Activated CD4-positive, alpha-beta memory T cell treated with anti-CD3 and anti-CD28 coated beads, Interleukin-2, amount 10 ng/mL, durations not matched to agents 7 days and 5 days (primary cell): ENCODE measurements at regions of chr9 and their contacts with region 1.

Region 1: GRCh38 chr9:69421908-69422801 is 97.1 kb downstream of the ENTREP1 start:
- DNase-seq: peak; percentile 50
- H3K4me3 Mint-ChIP-seq: no peak overlapping the region
- H3K27ac Mint-ChIP-seq: no peak overlapping the region
- H3K4me1 Mint-ChIP-seq: no peaks in the 10 kb centered on the region
- H3K27me3 Mint-ChIP-seq: peaks cover 4% of the 10 kb centered on the region

Region 2: DNA sequence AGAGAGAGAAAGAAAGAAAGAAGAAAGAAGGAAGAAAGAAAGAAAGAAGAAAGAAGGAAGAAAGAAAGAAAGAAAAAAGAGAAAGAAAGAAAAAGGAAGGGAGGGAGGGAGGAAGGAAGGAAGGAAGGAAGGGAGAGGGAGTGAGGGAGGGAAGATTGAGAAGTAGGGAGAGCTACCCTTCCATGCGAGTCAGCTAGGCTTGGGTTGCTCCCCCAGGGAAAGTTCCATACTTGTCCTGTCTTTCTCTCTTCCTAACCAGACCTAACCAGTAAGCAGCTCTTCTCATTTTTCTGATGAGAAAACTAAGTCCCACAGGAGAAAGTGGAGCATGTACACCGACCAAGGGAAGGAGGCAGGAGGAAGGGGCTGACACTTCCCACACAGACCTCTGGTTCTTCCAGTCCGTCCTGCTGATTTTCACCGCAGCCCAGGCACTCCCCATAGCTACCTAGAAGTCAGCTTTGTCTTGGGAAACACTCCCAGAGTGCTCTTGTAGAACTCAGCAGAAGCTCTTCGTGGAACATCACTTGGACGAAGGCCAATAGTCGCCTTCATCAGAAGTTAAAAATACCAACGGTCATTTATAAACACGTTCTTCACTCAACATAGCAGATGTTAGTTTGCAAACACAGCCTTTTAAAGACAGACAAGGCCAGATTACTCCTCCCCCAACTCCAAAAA is 126.1 kb before region 1 on chr9:
- CTCF ChIA-PET with region 1: no interaction called
- POLR2A ChIA-PET with region 1: no interaction called
- DNase-seq: no peak
- H3K4me3 Mint-ChIP-seq: no peak overlapping the region
- H3K27ac Mint-ChIP-seq: no peak overlapping the region
- H3K4me1 Mint-ChIP-seq: no peaks in the 10 kb centered on the region
- H3K27me3 Mint-ChIP-seq: peaks cover 10% of the 10 kb centered on the region

Region 3: GRCh38 chr9:69445251-69445650 is 23.1 kb after region 1 on chr9:
- CTCF ChIA-PET with region 1: no interaction called
- POLR2A ChIA-PET with region 1: no interaction called
- DNase-seq: no peak
- H3K4me3 Mint-ChIP-seq: no peak overlapping the region
- H3K27ac Mint-ChIP-seq: no peak overlapping the region
- H3K4me1 Mint-ChIP-seq: no peaks in the 10 kb centered on the region
- H3K27me3 Mint-ChIP-seq: no peaks in the 10 kb centered on the region

Region 4: DNA sequence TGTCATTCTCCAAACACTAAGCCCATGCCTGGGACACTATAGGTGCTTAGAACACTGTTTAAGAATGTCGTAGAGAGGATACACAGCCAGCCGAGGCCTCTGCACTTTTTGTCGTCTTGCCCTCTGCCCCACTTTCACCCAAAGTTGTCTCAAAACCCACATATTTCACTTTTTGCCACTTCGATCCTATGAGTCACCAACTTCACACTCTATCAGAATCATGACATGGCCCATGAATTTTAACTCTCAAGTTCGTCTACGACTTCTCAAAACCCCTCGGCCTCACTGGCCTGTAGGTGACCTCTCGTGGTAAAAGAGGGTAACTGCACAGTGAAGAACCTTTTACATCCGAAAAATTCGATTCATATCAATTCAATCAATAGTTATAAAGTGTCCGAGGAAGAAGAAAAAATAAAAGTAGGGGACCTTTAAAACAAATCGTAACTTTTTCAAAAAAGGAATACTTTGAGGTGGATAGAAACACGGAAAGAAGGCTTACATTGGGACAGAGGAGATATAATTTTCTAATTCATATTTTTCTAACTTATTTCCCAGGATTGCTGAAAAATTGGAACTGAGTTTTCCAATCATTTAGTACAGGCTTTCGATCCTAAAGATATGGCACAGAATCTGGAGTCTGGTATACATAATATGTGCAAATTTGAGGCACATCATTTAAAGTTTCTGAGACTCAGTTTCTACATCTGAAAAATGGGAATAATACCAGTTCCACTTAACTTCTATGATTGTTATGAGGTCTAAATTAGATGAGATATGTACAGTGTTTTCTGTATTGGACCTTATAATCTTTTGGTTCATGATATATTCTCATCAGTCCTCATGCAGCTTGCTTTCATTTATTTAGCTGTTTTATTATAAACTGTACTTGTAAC is 127.4 kb after region 1 on chr9:
- CTCF ChIA-PET with region 1: interaction called, 84 read pairs
- POLR2A ChIA-PET with region 1: no interaction called
- DNase-seq: peak; percentile 32
- H3K4me3 Mint-ChIP-seq: no peak overlapping the region
- H3K27ac Mint-ChIP-seq: no peak overlapping the region
- H3K4me1 Mint-ChIP-seq: peaks cover 3% of the 10 kb centered on the region
- H3K27me3 Mint-ChIP-seq: peaks cover 22% of the 10 kb centered on the region